ENCODE measurements at regions of chr6 and their contacts with region 1.

Region 1: GRCh38 chr6:149473080-149474052 is 11.4 kb downstream of the ZC3H12D start:
- DNase-seq: peak; percentile 65
- ATAC-seq: peak; percentile 92
- H3K4me3 ChIP-seq: peak overlapping the region in 2 of 3 experiments; percentile 17 to 34; a peak in 3 of 6 replicates
- H3K27ac ChIP-seq: peak overlapping the region; percentile 34
- H3K4me1 ChIP-seq: peaks cover 31% of the 10 kb centered on the region
- H3K27me3 ChIP-seq: no peaks in the 10 kb centered on the region
- CTCF ChIP-seq: no peak
- EP300 ChIP-seq: 0 out of 4 replicates have a peak, but pooled peaks of 1 of the 2 experiments have one; percentile 7
- POLR2A ChIP-seq: no peak
- RAD21 ChIP-seq: 0 out of 2 replicates have a peak, but pooled peaks have one; percentile 15

Region 2: DNA sequence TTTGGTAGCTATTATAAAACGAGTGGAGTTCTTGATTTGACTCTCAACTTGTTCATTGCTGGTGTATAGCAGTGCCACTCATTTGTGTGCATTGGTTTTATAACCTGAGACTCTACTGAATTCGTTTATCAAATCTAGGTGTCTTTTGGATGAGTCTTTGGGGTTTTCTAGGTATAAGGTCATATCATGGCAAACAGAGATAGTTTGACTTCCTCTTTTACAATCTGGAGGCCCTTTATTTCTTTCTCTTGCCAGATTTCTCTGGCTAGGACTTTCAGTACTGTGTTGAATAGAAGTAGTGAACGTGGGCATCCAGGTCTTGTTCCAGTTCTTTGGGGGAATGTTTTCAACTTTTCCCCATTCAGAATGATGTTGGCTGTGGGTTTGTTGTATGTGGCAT is 34.5 kb before region 1 on chr6:
- CTCF ChIA-PET with region 1: no interaction called
- POLR2A ChIA-PET with region 1: no interaction called
- in situ Hi-C with region 1: no loop called
- intact Hi-C with region 1: loop called (anchors 1 kb)
- DNase-seq: no peak
- ATAC-seq: no peak
- H3K4me3 ChIP-seq: no peak overlapping the region
- H3K27ac ChIP-seq: no peak overlapping the region
- H3K4me1 ChIP-seq: peaks cover 29% of the 10 kb centered on the region
- H3K27me3 ChIP-seq: no peaks in the 10 kb centered on the region
- CTCF ChIP-seq: no peak
- EP300 ChIP-seq: no peak
- POLR2A ChIP-seq: no peak
- RAD21 ChIP-seq: no peak

Region 3: DNA sequence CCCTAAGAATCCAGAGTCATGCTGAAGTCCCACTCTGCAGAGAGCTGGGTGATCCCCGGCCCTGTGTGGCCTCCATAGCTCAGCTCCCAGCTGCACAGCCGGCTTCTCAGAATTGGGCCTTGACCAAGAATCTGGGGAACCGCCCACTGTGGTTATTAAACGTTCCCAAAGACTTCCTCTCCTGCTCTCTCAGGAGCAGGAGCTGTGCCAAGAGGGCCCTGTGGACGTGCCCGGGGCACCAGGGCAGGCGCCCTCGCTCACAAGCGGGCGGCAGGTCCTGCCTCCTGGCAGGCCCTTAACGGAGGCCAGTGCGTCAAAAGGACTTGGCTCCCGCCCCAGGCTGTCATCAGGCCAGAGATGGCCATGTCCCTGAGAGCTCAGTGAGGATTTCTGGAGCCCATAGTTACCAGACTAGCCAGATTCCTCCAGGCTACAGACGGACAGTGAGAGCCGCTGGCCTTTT is 18.9 kb before region 1 on chr6:
- CTCF ChIA-PET with region 1: no interaction called
- POLR2A ChIA-PET with region 1: no interaction called
- in situ Hi-C with region 1: no loop called
- intact Hi-C with region 1: no loop called
- DNase-seq: no peak
- ATAC-seq: peak; percentile 64
- H3K4me3 ChIP-seq: peak overlapping the region in 1 of 3 experiments; percentile 19; a peak in 2 of 6 replicates
- H3K27ac ChIP-seq: no peak overlapping the region
- H3K4me1 ChIP-seq: peaks cover 32% of the 10 kb centered on the region
- H3K27me3 ChIP-seq: no peaks in the 10 kb centered on the region
- CTCF ChIP-seq: no peak
- EP300 ChIP-seq: no peak
- POLR2A ChIP-seq: no peak
- RAD21 ChIP-seq: no peak

Region 4: DNA sequence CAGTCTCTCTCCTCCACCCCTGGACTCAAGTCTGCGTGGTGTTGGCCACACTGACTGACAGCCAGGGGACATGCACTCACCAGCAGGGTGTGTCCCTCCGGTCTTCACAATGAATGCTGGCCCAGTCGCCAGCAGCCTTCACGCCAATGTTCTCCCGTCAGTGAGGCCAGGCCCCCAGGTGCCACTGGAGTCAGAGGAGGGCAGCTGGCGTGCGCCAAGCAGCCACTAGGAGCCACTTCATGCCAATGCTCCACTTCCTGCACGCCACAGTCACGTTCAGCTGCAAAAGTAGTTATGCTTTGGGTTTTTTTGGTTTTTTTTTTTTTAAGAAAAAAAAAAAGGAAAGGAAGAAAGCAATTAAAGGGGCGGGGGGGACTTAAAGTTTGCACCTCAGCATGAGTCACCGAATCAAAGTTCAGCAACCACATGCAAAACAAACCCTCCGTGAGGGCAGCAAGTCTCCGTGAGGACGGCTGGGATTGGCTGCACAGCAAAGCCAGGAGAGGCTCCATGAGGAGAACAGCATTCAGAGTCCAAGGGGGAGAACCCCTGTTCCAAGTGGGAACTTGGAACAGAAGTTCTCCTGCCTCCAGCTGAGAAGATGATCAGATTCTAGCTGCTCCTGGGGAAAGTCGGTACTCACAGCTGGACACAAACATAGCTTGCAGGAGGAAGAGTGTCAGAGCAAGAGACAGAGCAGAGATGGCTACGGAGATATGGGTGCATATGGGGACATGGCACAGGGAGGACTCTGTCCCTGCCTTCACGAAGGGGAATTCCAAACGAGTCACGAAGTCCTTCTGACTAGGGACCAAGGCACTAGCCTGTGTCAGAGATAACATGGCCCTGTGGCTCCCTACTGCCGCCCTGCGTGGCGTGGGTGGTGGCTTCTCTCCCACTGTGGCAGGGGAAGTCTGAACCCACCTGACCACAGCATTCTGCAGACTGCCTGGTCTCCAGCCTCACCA is 11.7 kb after region 1 on chr6 and contains the start of gene ZC3H12D:
- CTCF ChIA-PET with region 1: no interaction called
- POLR2A ChIA-PET with region 1: interaction called, 14 read pairs
- in situ Hi-C with region 1: no loop called
- intact Hi-C with region 1: no loop called
- DNase-seq: peak; percentile 91
- ATAC-seq: peak; percentile 97
- H3K4me3 ChIP-seq: peak within 1 kb of the TSS; percentile 46 to 72 (median 48)
- H3K27ac ChIP-seq: peak within 1 kb of the TSS; percentile 82
- H3K4me1 ChIP-seq: peaks cover 46% of the 10 kb centered on the region
- H3K27me3 ChIP-seq: no peaks in the 10 kb centered on the region
- CTCF ChIP-seq: peak; percentile 77
- EP300 ChIP-seq: peak in 1 of 2 experiments; percentile 79; a peak in 2 of 4 replicates
- POLR2A ChIP-seq: peak; percentile 74 to 80
- RAD21 ChIP-seq: peak; percentile 63
- total RNA-seq, gene ZC3H12D: 2.1 and 2.7 TPM in 2 replicates

Measured in HepG2 (cell line).